ENCODE measurements at regions of chr1 and their contacts with region 1.

Region 1: GRCh38 chr1:160951443-160952128 is 3.0 kb downstream of the ITLN2 start:
- DNase-seq: peak; percentile 79
- CTCF ChIP-seq: peak; percentile 81

Region 2: GRCh38 chr1:160261893-160262794 is 689.4 kb before region 1 on chr1 and contains the start of gene DCAF8:
- in situ Hi-C with region 1: no loop called
- DNase-seq: peak; percentile 94
- CTCF ChIP-seq: no peak

Region 3: DNA sequence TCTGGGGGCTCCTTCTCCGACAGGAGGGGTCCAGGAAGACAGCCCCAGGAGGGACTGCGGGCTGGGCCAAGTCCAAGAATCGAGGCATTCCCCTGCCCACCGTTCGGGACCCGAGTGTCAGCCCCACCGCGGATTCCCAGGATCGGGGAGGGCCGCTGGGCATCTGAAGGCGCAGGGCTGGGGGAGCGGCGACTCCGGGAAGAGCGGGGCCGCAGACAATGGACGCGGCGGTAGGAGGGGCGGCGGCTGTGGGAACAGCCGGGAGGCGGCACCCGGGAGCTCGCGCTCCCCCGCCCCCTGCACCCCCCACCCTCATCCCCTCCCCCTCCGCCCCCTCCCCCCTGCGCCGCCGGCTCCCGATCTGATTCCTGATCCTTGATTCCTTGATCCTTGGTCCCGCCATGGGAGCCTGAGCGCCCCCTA is 551.4 kb before region 1 on chr1 and contains the start of gene VANGL2:
- in situ Hi-C with region 1: loop called (anchors 25 kb)
- DNase-seq: peak; percentile 76
- CTCF ChIP-seq: no peak

Region 4: DNA sequence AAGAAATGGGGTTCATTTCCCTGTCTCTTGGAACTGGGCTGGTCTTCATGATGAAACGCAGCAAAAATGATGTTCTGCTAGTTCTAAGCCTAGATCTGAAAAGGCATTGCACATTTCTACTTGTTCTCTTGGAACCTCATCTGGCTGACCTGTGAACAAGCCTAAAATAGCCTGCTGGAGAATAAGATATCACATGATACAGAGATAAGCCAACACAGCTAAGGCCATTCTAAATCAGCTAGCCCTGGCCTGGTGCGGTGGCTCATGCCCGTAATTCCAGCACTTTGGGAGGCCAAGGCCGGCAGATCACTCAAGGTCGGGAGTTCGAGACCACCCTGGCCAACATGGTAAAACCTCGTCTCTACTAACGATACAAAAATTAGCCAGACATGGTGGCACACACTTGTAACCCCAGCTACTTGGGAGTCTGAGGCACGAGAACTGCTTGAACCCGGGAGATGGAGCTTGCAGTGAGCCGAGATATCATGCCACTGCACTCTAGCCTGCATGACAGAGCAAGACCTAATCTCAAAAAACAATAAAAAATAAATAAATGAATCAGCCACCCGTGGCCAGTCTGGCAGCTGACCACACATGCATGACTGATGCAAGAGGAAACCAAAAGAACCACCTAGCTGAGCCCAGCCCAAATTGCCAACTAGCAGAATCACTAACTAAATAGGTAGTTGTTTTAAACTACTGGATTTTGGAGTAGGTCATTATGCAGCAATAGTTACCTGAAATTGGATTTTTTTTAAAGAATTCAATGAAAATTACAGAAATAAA is 106.9 kb before region 1 on chr1:
- in situ Hi-C with region 1: loop called (anchors 5 kb)
- DNase-seq: no peak
- CTCF ChIP-seq: no peak

Region 5: GRCh38 chr1:161165742-161166668 is 214.4 kb after region 1 on chr1 and contains the start of gene PPOX:
- in situ Hi-C with region 1: no loop called
- DNase-seq: peak; percentile 91
- CTCF ChIP-seq: peak; percentile 54

Region 6: DNA sequence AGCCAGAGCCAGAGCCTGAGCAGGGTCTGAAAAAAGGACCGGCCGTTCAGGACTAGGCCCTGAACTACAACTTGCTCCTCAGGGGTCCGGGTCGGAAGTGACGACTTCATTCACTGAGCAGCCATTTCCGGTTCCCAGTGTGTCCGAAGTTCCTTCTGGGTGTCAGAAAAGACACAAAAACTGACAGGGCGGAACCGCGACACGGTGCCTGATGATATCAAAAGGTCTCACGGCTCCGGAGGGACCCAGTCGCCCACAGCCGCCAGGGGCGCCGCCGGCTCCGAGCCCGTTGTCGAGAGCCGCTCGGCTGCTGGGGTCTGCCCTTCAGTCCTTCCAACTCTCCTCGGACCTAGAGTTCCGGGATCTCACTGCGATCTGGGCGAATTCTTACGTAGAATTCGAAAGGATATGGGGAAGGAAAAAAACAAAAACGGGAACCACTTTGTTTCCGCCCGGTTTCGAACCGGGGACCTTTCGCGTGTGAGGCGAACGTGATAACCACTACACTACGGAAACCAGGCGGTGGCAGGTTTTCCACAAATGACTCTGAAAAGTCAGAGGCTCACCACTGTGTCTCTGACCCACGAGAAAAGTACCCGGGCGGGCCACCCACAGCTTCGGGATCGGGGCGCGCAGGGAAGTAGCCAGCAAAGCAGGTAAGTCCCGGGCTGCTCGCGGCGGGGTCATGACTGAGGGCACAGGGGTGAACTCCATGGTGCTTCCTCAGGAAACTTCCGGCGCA is 447.8 kb after region 1 on chr1:
- in situ Hi-C with region 1: no loop called
- DNase-seq: peak; percentile 86
- CTCF ChIP-seq: peak; percentile 42

Measured in GM13977 (cell line).